B cell (primary cell): ENCODE measurements at regions of chr17 and their contacts with region 1.

Region 1: GRCh38 chr17:45428050-45428617 is 4.5 kb downstream of the ARHGAP27 start:
- DNase-seq: peak; percentile 91
- ATAC-seq: peak; percentile 72
- H3K4me3 ChIP-seq: peak overlapping the region; percentile 21 to 79 (median 42)
- H3K4me3 Mint-ChIP-seq: peak overlapping the region; percentile 92
- H3K27ac ChIP-seq: peak overlapping the region; percentile 67 to 74
- H3K27ac Mint-ChIP-seq: peak overlapping the region; percentile 89
- H3K4me1 ChIP-seq: peaks cover 33 to 53% of the 10 kb centered on the region in 2 donors
- H3K4me1 Mint-ChIP-seq: peaks cover 34% of the 10 kb centered on the region
- H3K27me3 ChIP-seq: no peaks in the 10 kb centered on the region
- H3K27me3 Mint-ChIP-seq: no peaks in the 10 kb centered on the region
- CTCF ChIP-seq: peak; percentile 97

Region 2: DNA sequence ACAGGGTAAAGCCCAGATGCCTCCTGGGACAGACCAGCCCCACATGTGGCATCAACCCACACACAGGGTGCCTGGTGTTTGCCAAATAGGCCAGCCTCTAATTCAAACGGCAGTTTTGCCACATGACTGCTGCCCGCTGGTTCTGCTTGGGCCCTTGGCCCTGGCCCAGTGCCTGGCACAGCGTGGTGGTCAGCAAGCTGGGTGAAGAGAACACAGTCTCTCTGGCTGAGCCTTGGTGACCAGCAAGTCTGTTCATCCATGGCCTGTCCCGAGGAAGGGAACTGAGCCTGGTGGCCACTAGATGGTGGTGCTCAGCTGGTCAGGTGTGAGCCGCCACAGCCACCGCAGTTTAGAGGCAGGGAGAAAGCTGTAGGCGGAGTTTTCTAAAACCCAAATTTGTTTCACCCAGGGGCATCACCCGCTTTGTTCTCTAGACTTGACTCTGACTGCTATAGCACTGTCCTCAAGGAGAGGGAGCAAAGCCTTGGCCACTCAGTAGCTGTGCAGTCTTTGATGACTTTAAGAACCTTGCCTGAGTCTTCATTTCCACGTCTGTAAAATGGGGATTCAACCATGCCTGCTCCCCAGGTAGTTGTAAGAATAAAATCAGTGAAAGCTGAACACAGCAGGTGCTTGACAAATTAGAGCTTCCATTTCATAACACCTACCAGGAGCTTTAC is 508.1 kb before region 1 on chr17:
- CTCF ChIA-PET with region 1: no interaction called
- POLR2A ChIA-PET with region 1: no interaction called
- intact Hi-C with region 1: no loop called
- DNase-seq: peak; percentile 73
- ATAC-seq: peak; percentile 88
- H3K4me3 ChIP-seq: no peak overlapping the region
- H3K4me3 Mint-ChIP-seq: no peak overlapping the region
- H3K27ac ChIP-seq: no peak overlapping the region
- H3K27ac Mint-ChIP-seq: no peak overlapping the region
- H3K4me1 ChIP-seq: peaks cover 10 to 13% of the 10 kb centered on the region in 2 donors
- H3K4me1 Mint-ChIP-seq: peaks cover 12% of the 10 kb centered on the region
- H3K27me3 ChIP-seq: peaks cover 0 to 33% (median 6%) of the 10 kb centered on the region in 4 experiments
- H3K27me3 Mint-ChIP-seq: peaks cover 8% of the 10 kb centered on the region
- CTCF ChIP-seq: peak; percentile 61

Region 3: GRCh38 chr17:45410144-45411091 is 17.7 kb before region 1 on chr17:
- CTCF ChIA-PET with region 1: interaction called, 71 read pairs
- POLR2A ChIA-PET with region 1: interaction called, 10 read pairs
- intact Hi-C with region 1: loop called (anchors 1 kb)
- DNase-seq: peak; percentile 80
- ATAC-seq: peak; percentile 63
- H3K4me3 ChIP-seq: peak overlapping the region; percentile 78 to 97 (median 86)
- H3K4me3 Mint-ChIP-seq: peak overlapping the region; percentile 100
- H3K27ac ChIP-seq: peak overlapping the region; percentile 74 to 89
- H3K27ac Mint-ChIP-seq: peak overlapping the region; percentile 99
- H3K4me1 ChIP-seq: peaks cover 82 to 93% of the 10 kb centered on the region in 2 donors
- H3K4me1 Mint-ChIP-seq: peaks cover 83% of the 10 kb centered on the region
- H3K27me3 ChIP-seq: no peaks in the 10 kb centered on the region
- H3K27me3 Mint-ChIP-seq: no peaks in the 10 kb centered on the region
- CTCF ChIP-seq: no peak

Region 4: GRCh38 chr17:45650561-45650960 is 222.4 kb after region 1 on chr17:
- CTCF ChIA-PET with region 1: no interaction called
- POLR2A ChIA-PET with region 1: no interaction called
- intact Hi-C with region 1: no loop called
- DNase-seq: no peak
- ATAC-seq: no peak
- H3K4me3 ChIP-seq: no peak overlapping the region
- H3K4me3 Mint-ChIP-seq: no peak overlapping the region
- H3K27ac ChIP-seq: no peak overlapping the region
- H3K27ac Mint-ChIP-seq: no peak overlapping the region
- H3K4me1 ChIP-seq: no peaks in the 10 kb centered on the region
- H3K4me1 Mint-ChIP-seq: no peaks in the 10 kb centered on the region
- H3K27me3 ChIP-seq: peaks cover 0 to 12% (median 0%) of the 10 kb centered on the region in 4 experiments
- H3K27me3 Mint-ChIP-seq: peaks cover 10% of the 10 kb centered on the region
- CTCF ChIP-seq: no peak